Naive thymus-derived CD4-positive, alpha-beta T cell (primary cell): ENCODE measurements at regions of chr9 and their contacts with region 1.

Region 1: GRCh38 chr9:7976167-7976755 is 176.7 kb upstream of the DMAC1 start:
- DNase-seq: peak in 8 of 9 donors; percentile 46 to 89 (median 82)
- ATAC-seq: peak; percentile 97
- H3K4me3 ChIP-seq: no peak overlapping the region
- H3K4me3 Mint-ChIP-seq: peak overlapping the region; percentile 16 to 80 (median 71)
- H3K27ac ChIP-seq: peak overlapping the region; percentile 14
- H3K27ac Mint-ChIP-seq: peak overlapping the region; percentile 76 to 97 (median 87)
- H3K4me1 ChIP-seq: peaks cover 41 to 60% of the 10 kb centered on the region in 2 donors
- H3K4me1 Mint-ChIP-seq: peaks cover 44 to 82% (median 72%) of the 10 kb centered on the region in 7 donors
- H3K27me3 ChIP-seq: no peaks in the 10 kb centered on the region
- H3K27me3 Mint-ChIP-seq: no peaks in the 10 kb centered on the region

Region 2: GRCh38 chr9:6681147-6681956 is 1294.9 kb before region 1 on chr9:
- CTCF ChIA-PET with region 1: no interaction called
- POLR2A ChIA-PET with region 1: no interaction called
- intact Hi-C with region 1: loop called in 1 of 2 experiments (anchors 10 kb)
- DNase-seq: peak; percentile 71 to 95 (median 90)
- ATAC-seq: peak; percentile 90
- H3K4me3 ChIP-seq: peak overlapping the region; percentile 89
- H3K4me3 Mint-ChIP-seq: peak overlapping the region; percentile 88 to 98 (median 95)
- H3K27ac ChIP-seq: peak overlapping the region; percentile 91
- H3K27ac Mint-ChIP-seq: peak overlapping the region; percentile 97 to 100 (median 99)
- H3K4me1 ChIP-seq: peaks cover 0 to 6% of the 10 kb centered on the region in 2 donors
- H3K4me1 Mint-ChIP-seq: peaks cover 7 to 31% (median 20%) of the 10 kb centered on the region in 7 donors
- H3K27me3 ChIP-seq: no peaks in the 10 kb centered on the region
- H3K27me3 Mint-ChIP-seq: no peaks in the 10 kb centered on the region

Region 3: DNA sequence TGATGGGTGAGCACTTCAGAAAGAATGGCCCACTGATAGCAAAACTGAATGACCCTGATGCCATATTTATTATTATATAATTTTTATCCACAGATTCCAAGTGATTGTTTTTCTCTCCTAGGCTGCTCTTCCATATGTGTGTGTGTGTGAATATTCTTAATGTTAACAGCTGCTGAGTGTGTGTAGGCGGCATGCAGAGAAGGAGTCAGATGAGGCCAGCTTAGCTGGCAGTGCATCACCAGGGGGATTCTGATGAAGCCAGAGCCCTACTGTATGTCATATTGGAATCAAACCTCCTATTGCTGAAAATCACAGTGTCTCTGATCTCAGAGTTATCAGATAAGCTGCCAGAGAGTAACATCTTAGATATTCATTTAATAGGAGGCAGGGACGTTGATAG is 353.8 kb before region 1 on chr9:
- CTCF ChIA-PET with region 1: no interaction called
- POLR2A ChIA-PET with region 1: no interaction called
- intact Hi-C with region 1: loop called (anchors 1 to 2 kb)
- DNase-seq: no peak
- ATAC-seq: no peak
- H3K4me3 ChIP-seq: no peak overlapping the region
- H3K4me3 Mint-ChIP-seq: no peak overlapping the region
- H3K27ac ChIP-seq: no peak overlapping the region
- H3K27ac Mint-ChIP-seq: no peak overlapping the region
- H3K4me1 ChIP-seq: peaks cover 10 to 15% of the 10 kb centered on the region in 2 donors
- H3K4me1 Mint-ChIP-seq: peaks cover 12 to 29% (median 23%) of the 10 kb centered on the region in 7 donors
- H3K27me3 ChIP-seq: no peaks in the 10 kb centered on the region
- H3K27me3 Mint-ChIP-seq: no peaks in the 10 kb centered on the region

Region 4: GRCh38 chr9:7799234-7799943 is 176.9 kb before region 1 on chr9 and contains the start of gene DMAC1:
- CTCF ChIA-PET with region 1: no interaction called
- POLR2A ChIA-PET with region 1: interaction called, 6 read pairs
- intact Hi-C with region 1: loop called (anchors 1 kb)
- DNase-seq: peak; percentile 50 to 79 (median 72)
- ATAC-seq: peak; percentile 96
- H3K4me3 ChIP-seq: peak within 1 kb of the TSS; percentile 96
- H3K4me3 Mint-ChIP-seq: peak within 1 kb of the TSS; percentile 91 to 98 (median 95)
- H3K27ac ChIP-seq: peak within 1 kb of the TSS; percentile 88
- H3K27ac Mint-ChIP-seq: peak within 1 kb of the TSS; percentile 90 to 98 (median 93)
- H3K4me1 ChIP-seq: peaks cover 0 to 8% of the 10 kb centered on the region in 2 donors
- H3K4me1 Mint-ChIP-seq: peaks cover 12 to 62% (median 40%) of the 10 kb centered on the region in 7 donors
- H3K27me3 ChIP-seq: no peaks in the 10 kb centered on the region
- H3K27me3 Mint-ChIP-seq: peaks cover 0 to under 1% (median 0%) of the 10 kb centered on the region in 5 donors
- total RNA-seq, gene DMAC1: 17.5 to 54.1 (median 44.3) TPM

Region 5: GRCh38 chr9:7862170-7862569 is 114.1 kb before region 1 on chr9:
- CTCF ChIA-PET with region 1: no interaction called
- POLR2A ChIA-PET with region 1: no interaction called
- intact Hi-C with region 1: no loop called
- DNase-seq: no peak
- ATAC-seq: no peak
- H3K4me3 ChIP-seq: no peak overlapping the region
- H3K4me3 Mint-ChIP-seq: no peak overlapping the region
- H3K27ac ChIP-seq: no peak overlapping the region
- H3K27ac Mint-ChIP-seq: peak overlapping the region in 1 of 9 donors; percentile 30
- H3K4me1 ChIP-seq: no peaks in the 10 kb centered on the region
- H3K4me1 Mint-ChIP-seq: peaks cover 0 to 6% (median 0%) of the 10 kb centered on the region in 7 donors
- H3K27me3 ChIP-seq: no peaks in the 10 kb centered on the region
- H3K27me3 Mint-ChIP-seq: peaks cover 0 to 5% (median 0%) of the 10 kb centered on the region in 5 donors

Region 6: GRCh38 chr9:7879551-7880245 is 96.6 kb before region 1 on chr9:
- CTCF ChIA-PET with region 1: no interaction called
- POLR2A ChIA-PET with region 1: no interaction called
- intact Hi-C with region 1: loop called in 1 of 2 experiments (anchors 2 kb)
- DNase-seq: peak in 1 of 9 donors; percentile 32
- ATAC-seq: peak; percentile 51
- H3K4me3 ChIP-seq: no peak overlapping the region
- H3K4me3 Mint-ChIP-seq: no peak overlapping the region
- H3K27ac ChIP-seq: no peak overlapping the region
- H3K27ac Mint-ChIP-seq: peak overlapping the region in 1 of 9 donors; percentile 36
- H3K4me1 ChIP-seq: no peaks in the 10 kb centered on the region
- H3K4me1 Mint-ChIP-seq: peaks cover 2 to 13% (median 4%) of the 10 kb centered on the region in 7 donors
- H3K27me3 ChIP-seq: no peaks in the 10 kb centered on the region
- H3K27me3 Mint-ChIP-seq: no peaks in the 10 kb centered on the region

Region 7: DNA sequence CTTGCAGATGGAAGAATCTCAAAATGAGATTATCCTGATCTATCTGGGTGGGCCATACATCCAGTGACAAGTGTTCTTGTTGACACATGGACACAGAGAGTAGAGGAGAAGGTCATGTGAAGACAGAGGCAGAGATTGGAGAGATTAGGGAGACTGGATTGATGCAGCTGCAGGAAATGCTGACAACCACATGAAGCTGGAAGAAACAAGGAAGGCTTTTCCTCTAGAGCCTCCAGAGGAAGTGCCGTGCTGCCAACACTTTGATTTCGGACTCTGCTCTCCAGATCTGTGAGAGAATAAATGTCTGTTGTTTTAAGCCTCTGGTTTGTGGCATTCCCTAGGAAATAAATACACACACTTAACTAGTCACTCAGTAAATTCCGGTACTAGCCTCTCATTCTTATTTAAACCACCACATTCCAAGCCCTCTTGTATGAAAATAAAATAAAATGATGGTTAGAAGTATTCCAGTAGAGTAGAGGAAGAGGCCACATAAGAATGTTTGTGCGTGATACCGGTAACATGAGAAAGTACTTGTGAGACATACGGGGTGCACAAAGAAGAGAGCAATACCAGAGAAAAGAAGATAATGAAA is 65.7 kb before region 1 on chr9:
- CTCF ChIA-PET with region 1: no interaction called
- POLR2A ChIA-PET with region 1: no interaction called
- intact Hi-C with region 1: no loop called
- DNase-seq: no peak
- ATAC-seq: no peak
- H3K4me3 ChIP-seq: no peak overlapping the region
- H3K4me3 Mint-ChIP-seq: no peak overlapping the region
- H3K27ac ChIP-seq: no peak overlapping the region
- H3K27ac Mint-ChIP-seq: peak overlapping the region in 1 of 9 donors; percentile 9
- H3K4me1 ChIP-seq: peaks cover 0 to 4% of the 10 kb centered on the region in 2 donors
- H3K4me1 Mint-ChIP-seq: peaks cover 0 to 14% (median 10%) of the 10 kb centered on the region in 7 donors
- H3K27me3 ChIP-seq: no peaks in the 10 kb centered on the region
- H3K27me3 Mint-ChIP-seq: peaks cover 0 to 5% (median 0%) of the 10 kb centered on the region in 5 donors

Region 8: GRCh38 chr9:7947577-7947976 is 28.7 kb before region 1 on chr9:
- CTCF ChIA-PET with region 1: no interaction called
- POLR2A ChIA-PET with region 1: no interaction called
- intact Hi-C with region 1: loop called in 1 of 2 experiments (anchors 2 kb)
- DNase-seq: no peak
- ATAC-seq: no peak
- H3K4me3 ChIP-seq: no peak overlapping the region
- H3K4me3 Mint-ChIP-seq: no peak overlapping the region
- H3K27ac ChIP-seq: no peak overlapping the region
- H3K27ac Mint-ChIP-seq: peak overlapping the region in 2 of 9 donors; percentile 38 to 49
- H3K4me1 ChIP-seq: no peaks in the 10 kb centered on the region
- H3K4me1 Mint-ChIP-seq: peaks cover 0 to 16% (median 8%) of the 10 kb centered on the region in 7 donors
- H3K27me3 ChIP-seq: no peaks in the 10 kb centered on the region
- H3K27me3 Mint-ChIP-seq: no peaks in the 10 kb centered on the region

Region 9: GRCh38 chr9:8156346-8156745 is 180.1 kb after region 1 on chr9:
- CTCF ChIA-PET with region 1: no interaction called
- POLR2A ChIA-PET with region 1: no interaction called
- intact Hi-C with region 1: no loop called
- DNase-seq: no peak
- ATAC-seq: no peak
- H3K4me3 ChIP-seq: no peak overlapping the region
- H3K4me3 Mint-ChIP-seq: no peak overlapping the region
- H3K27ac ChIP-seq: no peak overlapping the region
- H3K27ac Mint-ChIP-seq: no peak overlapping the region
- H3K4me1 ChIP-seq: no peaks in the 10 kb centered on the region
- H3K4me1 Mint-ChIP-seq: peaks cover 0 to 5% (median 0%) of the 10 kb centered on the region in 7 donors
- H3K27me3 ChIP-seq: no peaks in the 10 kb centered on the region
- H3K27me3 Mint-ChIP-seq: no peaks in the 10 kb centered on the region

Region 10: GRCh38 chr9:8429768-8430167 is 453.5 kb after region 1 on chr9:
- CTCF ChIA-PET with region 1: no interaction called
- POLR2A ChIA-PET with region 1: no interaction called
- intact Hi-C with region 1: loop called in 1 of 2 experiments (anchors 2 kb)
- DNase-seq: no peak
- ATAC-seq: no peak
- H3K4me3 ChIP-seq: no peak overlapping the region
- H3K4me3 Mint-ChIP-seq: no peak overlapping the region
- H3K27ac ChIP-seq: no peak overlapping the region
- H3K27ac Mint-ChIP-seq: peak overlapping the region in 1 of 9 donors; percentile 10
- H3K4me1 ChIP-seq: no peaks in the 10 kb centered on the region
- H3K4me1 Mint-ChIP-seq: peaks cover 0 to 31% (median 16%) of the 10 kb centered on the region in 7 donors
- H3K27me3 ChIP-seq: no peaks in the 10 kb centered on the region
- H3K27me3 Mint-ChIP-seq: peaks cover 0 to 11% (median 0%) of the 10 kb centered on the region in 5 donors

Region 11: DNA sequence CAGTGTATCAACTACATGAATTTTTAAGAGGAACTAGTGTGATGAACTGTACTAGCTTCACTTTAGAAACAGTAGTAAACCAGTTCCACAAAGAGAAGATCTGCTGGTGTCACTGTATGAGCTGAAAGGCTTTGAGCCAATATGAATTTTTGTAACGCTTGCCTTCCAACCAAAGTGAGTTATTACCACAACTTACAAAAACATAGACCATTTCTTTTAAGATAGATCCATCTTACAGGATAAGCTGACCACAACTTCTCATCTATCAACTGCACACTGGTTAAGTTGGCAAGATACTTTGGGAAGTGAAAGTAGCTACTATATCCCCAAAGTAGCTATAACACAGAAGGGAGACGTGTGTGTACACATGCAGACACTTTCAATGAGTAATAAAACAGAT is 672.9 kb after region 1 on chr9:
- CTCF ChIA-PET with region 1: no interaction called
- POLR2A ChIA-PET with region 1: no interaction called
- intact Hi-C with region 1: no loop called
- DNase-seq: no peak
- ATAC-seq: peak; percentile 55
- H3K4me3 ChIP-seq: no peak overlapping the region
- H3K4me3 Mint-ChIP-seq: no peak overlapping the region
- H3K27ac ChIP-seq: no peak overlapping the region
- H3K27ac Mint-ChIP-seq: no peak overlapping the region
- H3K4me1 ChIP-seq: no peaks in the 10 kb centered on the region
- H3K4me1 Mint-ChIP-seq: no peaks in the 10 kb centered on the region
- H3K27me3 ChIP-seq: no peaks in the 10 kb centered on the region
- H3K27me3 Mint-ChIP-seq: peaks cover 0 to 6% (median 0%) of the 10 kb centered on the region in 5 donors